ENCODE measurements at regions of chr10 and their contacts with region 1.

Region 1: GRCh38 chr10:101840741-101841453 is 2.7 kb downstream of the KCNIP2 start:
- DNase-seq: peak; percentile 83 to 86
- ATAC-seq: peak; percentile 78 to 90
- H3K4me3 ChIP-seq: peak overlapping the region; percentile 38; the same call in 1 of the 3 replicates
- H3K27ac ChIP-seq: peak overlapping the region in 1 of 2 experiments; percentile 77; a peak in 3 of 6 replicates
- H3K4me1 ChIP-seq: peaks cover 20% of the 10 kb centered on the region
- CTCF ChIP-seq: peak; percentile 96
- EP300 ChIP-seq: no peak
- POLR2A ChIP-seq: no peak
- RAD21 ChIP-seq: peak; percentile 87 to 95

Region 2: DNA sequence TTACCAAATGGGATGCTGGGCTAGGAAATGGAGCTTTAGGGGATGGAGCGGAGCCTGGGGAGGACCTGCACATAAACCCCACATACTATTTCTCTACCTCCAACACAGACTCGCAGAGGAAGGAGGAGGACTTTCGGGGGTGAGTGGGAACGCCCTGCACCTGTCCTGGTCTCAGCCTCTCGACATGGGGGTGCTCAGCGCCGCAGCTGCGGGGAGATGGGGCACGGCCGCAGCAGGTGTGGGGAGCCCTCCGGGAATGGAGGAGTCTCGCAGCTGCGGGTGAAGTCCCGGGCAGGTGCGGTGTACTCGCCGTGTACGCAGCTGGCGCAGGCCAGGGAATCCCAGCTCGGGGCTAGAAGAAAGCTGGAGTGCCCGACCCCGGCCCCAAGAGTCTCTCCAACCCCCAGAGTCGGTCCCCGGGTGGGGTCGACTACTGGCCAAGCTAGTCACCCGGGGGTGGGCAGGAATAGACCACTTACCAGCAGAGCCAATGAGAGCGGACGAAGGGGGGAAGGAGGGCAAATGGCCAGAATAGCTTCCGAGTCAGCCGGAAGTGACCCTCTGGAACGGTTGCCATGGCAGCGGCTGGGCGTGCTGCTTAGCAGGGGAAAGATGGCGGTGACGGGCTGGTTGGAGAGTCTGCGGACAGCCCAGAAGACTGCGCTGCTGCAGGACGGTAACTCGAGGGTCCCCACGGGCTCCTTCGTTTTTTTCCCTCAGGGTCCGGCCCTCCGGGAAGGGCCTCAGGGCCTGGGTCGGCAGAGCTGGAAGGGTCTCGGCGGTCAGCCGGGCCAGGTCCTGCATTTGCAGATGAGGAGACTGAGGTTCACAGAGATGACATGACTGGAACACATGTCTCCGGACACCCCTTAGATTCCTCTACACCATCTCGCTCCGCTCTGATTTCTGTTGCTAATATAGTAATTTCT is 252.9 kb before region 1 on chr10 and contains the starts of genes DPCD and POLL:
- CTCF ChIA-PET with region 1: no interaction called
- POLR2A ChIA-PET with region 1: no interaction called
- DNase-seq: peak; percentile 90 to 99
- ATAC-seq: peak; percentile 97 to 98
- H3K4me3 ChIP-seq: peak within 1 kb of the TSS; percentile 69
- H3K27ac ChIP-seq: peak within 1 kb of the TSS; percentile 85 to 96
- H3K4me1 ChIP-seq: peaks cover 15% of the 10 kb centered on the region
- CTCF ChIP-seq: no peak
- EP300 ChIP-seq: no peak
- POLR2A ChIP-seq: peak; percentile 48; the same call in 1 of the 2 replicates
- RAD21 ChIP-seq: no peak
- polyA plus RNA-seq, gene DPCD: 39.7 and 40.8 TPM in 2 replicates
- polyA plus RNA-seq, gene POLL: 16.7 and 18.1 TPM in 2 replicates

Region 3: GRCh38 chr10:101749047-101750016 is 91.6 kb before region 1 on chr10:
- CTCF ChIA-PET with region 1: no interaction called
- POLR2A ChIA-PET with region 1: no interaction called
- DNase-seq: peak in 1 of 2 experiments; percentile 28
- ATAC-seq: peak; percentile 24 to 79; a peak in 4 of 6 replicates
- H3K4me3 ChIP-seq: no peak overlapping the region
- H3K27ac ChIP-seq: no peak overlapping the region
- H3K4me1 ChIP-seq: no peaks in the 10 kb centered on the region
- CTCF ChIP-seq: 0 out of 3 replicates have a peak, but pooled peaks have one; percentile 7
- EP300 ChIP-seq: no peak
- POLR2A ChIP-seq: no peak
- RAD21 ChIP-seq: no peak

Region 4: DNA sequence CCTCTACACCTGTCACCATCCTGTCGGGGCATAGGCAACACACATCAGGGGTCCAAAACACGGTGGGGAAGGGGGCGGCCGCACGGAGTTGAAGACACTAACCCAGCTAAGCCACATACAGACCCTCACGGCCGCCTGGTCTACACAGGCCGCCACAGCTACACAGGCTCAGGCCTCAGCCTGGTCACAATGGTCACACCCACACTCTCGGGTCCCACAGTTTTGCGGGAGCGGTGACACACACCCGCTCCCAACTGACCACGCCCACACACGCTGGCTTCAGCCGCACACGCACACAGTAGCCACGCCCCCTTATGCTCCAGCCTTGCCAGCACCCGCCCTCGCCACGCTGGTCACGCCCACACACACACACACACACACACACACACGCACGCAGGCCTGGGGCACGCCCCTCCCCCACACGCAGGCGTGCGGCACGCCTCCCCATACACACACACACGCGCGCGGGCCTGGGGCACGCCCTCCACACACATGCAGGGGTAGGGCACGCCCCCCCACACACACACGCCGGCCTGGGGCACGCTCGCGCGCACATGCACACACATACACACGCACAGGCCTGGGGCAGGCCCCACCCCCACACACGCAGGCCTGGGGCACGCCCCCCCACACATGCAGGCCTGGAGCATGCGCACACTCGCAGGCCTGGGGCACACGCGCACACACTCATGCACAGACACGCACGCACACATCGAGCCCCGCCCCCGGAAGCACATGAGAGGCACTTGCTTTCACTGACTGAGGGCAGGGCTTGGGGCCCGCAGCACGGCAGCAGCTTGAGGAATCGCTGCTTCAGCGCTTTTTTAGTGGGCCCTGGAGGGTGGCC is 10.4 kb before region 1 on chr10:
- CTCF ChIA-PET with region 1: interaction called, 46 read pairs
- POLR2A ChIA-PET with region 1: no interaction called
- DNase-seq: peak; percentile 93 to 95
- ATAC-seq: peak; percentile 76 to 89
- H3K4me3 ChIP-seq: peak overlapping the region; percentile 53
- H3K27ac ChIP-seq: peak overlapping the region; percentile 84 to 94
- H3K4me1 ChIP-seq: peaks cover 18% of the 10 kb centered on the region
- CTCF ChIP-seq: no peak
- EP300 ChIP-seq: no peak
- POLR2A ChIP-seq: peak; percentile 45
- RAD21 ChIP-seq: no peak

Region 5: GRCh38 chr10:101889256-101890210 is 48.6 kb after region 1 on chr10:
- CTCF ChIA-PET with region 1: interaction called, 73 read pairs
- POLR2A ChIA-PET with region 1: no interaction called
- DNase-seq: peak; percentile 69 to 73
- ATAC-seq: peak; percentile 93; a peak in 5 of 6 replicates
- H3K4me3 ChIP-seq: no peak overlapping the region
- H3K27ac ChIP-seq: peak overlapping the region; percentile 31 to 65; a peak in 2 of 6 replicates
- H3K4me1 ChIP-seq: peaks cover 12% of the 10 kb centered on the region
- CTCF ChIP-seq: peak; percentile 93
- EP300 ChIP-seq: no peak
- POLR2A ChIP-seq: no peak
- RAD21 ChIP-seq: peak; percentile 83 to 89

Region 6: DNA sequence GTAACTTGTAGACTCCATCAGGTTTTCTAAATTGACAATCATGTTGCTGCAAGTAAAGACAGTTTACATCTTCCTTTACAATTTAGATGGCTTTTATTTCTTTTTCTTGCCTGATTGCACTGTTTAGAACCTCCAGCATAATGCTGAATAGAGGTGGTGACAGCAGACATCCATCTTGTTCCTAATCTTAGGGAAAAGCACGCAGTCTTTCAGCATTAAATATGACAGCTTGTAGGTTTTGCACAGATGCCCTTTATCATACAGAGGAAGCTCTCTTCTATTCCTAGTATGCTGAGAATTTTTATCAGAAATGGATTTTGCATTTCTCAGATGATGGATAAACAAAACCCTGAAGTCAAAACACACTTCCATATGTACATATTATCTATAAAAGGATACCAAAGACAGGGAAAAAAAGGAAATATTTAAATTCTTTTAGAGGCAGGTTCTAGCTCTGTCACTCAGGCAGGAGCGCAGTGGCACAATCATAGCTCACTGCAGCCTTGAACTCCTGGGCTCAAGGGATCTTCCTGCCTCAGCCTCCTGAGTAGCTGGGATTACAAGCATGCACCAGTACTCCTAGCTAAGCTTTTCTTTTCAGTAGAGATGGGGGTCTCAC is 71.8 kb after region 1 on chr10:
- CTCF ChIA-PET with region 1: interaction called, 15 read pairs
- POLR2A ChIA-PET with region 1: no interaction called
- DNase-seq: no peak
- ATAC-seq: no peak
- H3K4me3 ChIP-seq: no peak overlapping the region
- H3K27ac ChIP-seq: no peak overlapping the region
- H3K4me1 ChIP-seq: no peaks in the 10 kb centered on the region
- CTCF ChIP-seq: no peak
- EP300 ChIP-seq: no peak
- POLR2A ChIP-seq: no peak
- RAD21 ChIP-seq: no peak

Region 7: GRCh38 chr10:101995451-101996063 is 154.7 kb after region 1 on chr10:
- CTCF ChIA-PET with region 1: interaction called, 49 read pairs
- POLR2A ChIA-PET with region 1: no interaction called
- DNase-seq: no peak
- ATAC-seq: peak in 1 of 2 experiments; percentile 46; a peak in 3 of 6 replicates
- H3K4me3 ChIP-seq: no peak overlapping the region
- H3K27ac ChIP-seq: peak overlapping the region in 1 of 2 experiments; percentile 34; a peak in 2 of 6 replicates
- H3K4me1 ChIP-seq: peaks cover 17% of the 10 kb centered on the region
- CTCF ChIP-seq: no peak
- EP300 ChIP-seq: no peak
- POLR2A ChIP-seq: no peak
- RAD21 ChIP-seq: no peak

Region 8: GRCh38 chr10:102072673-102073527 is 232.0 kb after region 1 on chr10:
- CTCF ChIA-PET with region 1: interaction called, 34 read pairs
- POLR2A ChIA-PET with region 1: interaction called, 4 read pairs
- DNase-seq: peak; percentile 81 to 82
- ATAC-seq: peak; percentile 91 to 96
- H3K4me3 ChIP-seq: no peak overlapping the region
- H3K27ac ChIP-seq: no peak overlapping the region
- H3K4me1 ChIP-seq: 0 out of 3 replicates have a peak, but pooled peaks cover 2% of the 10 kb centered on the region
- CTCF ChIP-seq: peak; percentile 89
- EP300 ChIP-seq: no peak
- POLR2A ChIP-seq: no peak
- RAD21 ChIP-seq: peak; percentile 82 to 86